GM10248 (cell line): ENCODE measurements at regions of chr11 and their contacts with region 1.

Region 1: DNA sequence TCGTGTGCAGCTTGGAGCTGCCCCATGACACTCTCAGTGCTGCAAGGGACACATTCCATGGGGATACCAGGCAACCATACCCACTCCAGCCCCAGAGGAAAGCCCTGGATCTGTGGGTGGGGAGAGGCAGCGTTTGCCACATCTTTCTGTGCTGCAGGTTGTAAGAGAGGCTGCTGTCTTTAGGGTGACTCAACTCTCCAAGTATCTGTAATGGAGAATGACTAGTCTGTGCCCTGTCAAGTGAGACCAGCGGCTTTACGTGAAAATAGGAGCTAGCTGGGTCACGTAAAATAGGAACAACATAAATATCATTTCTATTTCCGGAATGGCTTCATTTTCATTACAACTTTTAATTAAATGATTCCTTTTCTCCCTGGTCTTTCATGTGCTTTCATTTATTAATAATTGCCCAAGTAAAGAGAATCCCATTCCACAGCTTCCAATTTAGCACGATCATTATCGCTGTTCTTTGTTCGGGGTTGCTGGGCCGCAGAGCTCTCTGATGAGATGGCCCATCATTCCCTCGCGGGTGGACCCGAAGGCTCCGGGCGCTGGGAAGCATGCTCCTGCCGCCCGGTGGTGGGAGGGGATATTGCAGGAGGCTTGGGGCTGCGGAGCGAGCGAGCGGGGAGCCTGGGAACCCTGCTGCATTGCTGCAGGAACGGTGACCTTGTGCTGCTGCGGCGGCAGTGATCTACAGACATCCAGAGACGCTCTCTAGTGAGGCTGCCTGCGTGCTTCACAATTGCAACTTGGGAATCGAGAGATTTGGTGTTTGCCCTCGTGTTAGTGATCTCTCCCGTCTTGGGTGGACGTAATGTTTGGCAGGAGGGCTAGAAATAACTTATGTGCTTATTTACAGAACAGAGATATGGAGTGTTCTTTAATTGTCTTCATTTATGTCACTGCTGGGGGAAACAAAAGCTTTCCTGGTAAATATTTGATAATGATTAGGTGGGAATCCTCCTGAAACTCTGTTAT is 10.6 kb downstream of the SLC6A5 start:
- DNase-seq: peak; percentile 77
- CTCF ChIP-seq: peak; percentile 99

Region 2: DNA sequence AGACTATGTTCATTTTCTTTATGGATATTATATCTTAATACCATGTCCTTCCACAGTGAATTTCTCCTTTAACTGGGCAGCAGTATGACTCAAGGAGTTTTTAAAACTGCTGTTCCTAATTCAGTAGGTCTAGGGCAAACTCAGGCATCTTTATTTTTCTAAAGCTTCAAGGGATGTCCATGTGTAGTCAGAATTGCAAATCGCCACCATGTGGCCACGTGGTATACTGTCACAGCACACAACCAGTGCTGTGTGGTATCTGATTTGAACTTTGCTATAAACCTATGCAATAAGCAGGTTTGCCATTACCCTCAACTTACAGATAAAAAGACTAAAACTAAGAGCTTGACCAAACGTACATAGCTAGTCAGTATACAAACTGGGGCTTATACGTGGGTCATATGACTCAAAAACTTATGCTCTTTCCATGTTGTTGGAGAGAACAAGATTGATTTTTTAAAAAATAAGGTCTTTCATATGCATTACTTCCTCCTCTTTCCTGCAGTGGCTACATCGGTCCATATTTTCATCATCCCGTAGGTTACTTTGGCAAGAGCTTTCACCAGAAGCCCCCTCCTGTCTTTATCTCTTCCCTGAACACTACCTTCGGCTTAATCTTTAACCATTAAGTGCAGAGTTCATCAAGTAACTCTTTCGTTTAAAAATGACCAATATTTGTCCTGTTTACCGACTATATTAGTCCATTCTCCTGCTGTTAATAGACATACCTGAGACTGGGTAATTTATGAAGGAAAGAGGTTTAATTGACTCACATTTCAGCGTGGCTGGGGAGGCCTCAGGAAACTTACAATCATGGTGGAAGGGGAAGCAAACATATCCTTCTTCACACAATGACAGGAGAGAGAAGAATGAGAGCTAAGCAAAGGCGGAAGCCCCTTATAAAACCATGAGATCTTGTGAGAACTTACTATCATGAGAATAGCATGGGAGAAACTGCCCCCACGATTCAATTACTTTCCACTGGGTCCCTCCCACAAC is 254.5 kb before region 1 on chr11:
- CTCF ChIA-PET with region 1: interaction called, 13 read pairs
- POLR2A ChIA-PET with region 1: no interaction called
- DNase-seq: peak; percentile 24
- CTCF ChIP-seq: peak; percentile 48

Region 3: DNA sequence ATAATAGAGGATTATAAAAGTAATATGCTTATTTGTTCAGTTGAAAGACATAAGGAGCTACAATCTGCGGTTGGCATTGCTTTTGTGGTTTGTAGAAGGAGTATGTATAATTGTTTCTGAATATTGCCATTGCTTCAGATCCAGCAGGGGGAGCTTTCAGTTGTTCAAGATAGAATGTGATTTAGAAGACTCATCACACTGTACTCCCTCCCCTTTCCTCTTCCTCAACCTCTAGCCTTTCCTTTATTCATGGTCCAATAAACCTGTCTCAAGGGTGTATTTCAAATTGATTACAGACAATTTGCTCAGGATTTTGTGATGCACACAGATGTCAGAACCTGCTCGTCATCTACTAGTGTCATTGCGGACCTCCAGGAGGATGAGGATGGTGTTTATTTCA is 212.7 kb before region 1 on chr11:
- CTCF ChIA-PET with region 1: interaction called, 17 read pairs
- POLR2A ChIA-PET with region 1: no interaction called
- DNase-seq: peak; percentile 37
- CTCF ChIP-seq: peak; percentile 36

Region 4: DNA sequence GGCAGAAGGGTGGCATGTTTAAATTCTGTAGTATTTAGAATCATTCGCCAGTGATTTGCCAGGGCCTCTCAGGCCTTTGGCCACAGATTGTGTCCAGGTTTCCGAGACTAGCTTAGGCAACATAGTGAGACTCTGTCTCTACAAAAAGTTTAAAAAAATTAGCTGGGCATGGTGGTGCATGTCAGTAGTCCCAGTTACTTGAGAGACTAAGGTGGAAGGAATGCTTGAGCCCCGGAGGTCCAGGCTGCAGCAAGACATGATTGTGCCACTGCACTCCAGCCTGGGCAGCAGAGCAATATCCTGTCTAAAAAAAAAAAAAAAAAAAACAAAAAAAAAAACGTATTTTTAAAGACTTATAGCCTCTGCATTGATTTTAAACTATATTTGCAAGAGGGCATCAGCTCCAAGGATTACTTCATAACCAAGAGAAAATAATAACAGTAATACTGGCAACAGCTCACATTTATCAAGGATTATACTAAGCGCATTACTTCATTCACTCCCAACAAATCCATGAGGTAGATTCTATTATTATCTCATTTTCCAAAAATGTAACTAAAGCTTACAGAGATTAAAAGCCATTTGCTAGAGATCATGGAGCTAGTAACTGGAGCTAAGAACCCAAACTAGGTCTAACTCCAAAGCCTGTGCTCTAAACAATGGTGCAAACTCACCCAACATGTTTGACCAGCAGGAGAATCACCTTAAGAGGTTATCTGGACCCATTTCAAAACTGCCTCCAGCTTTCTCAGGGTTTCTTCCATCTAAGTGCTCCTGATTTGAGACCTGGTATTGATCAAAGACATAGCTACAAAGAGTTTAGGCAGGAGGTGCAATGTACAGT is 43.2 kb before region 1 on chr11:
- CTCF ChIA-PET with region 1: no interaction called
- POLR2A ChIA-PET with region 1: no interaction called
- DNase-seq: no peak
- CTCF ChIP-seq: no peak

Region 5: GRCh38 chr11:20626279-20626678 is 16.3 kb after region 1 on chr11:
- CTCF ChIA-PET with region 1: interaction called, 16 read pairs
- POLR2A ChIA-PET with region 1: no interaction called
- DNase-seq: no peak
- CTCF ChIP-seq: no peak

Region 6: DNA sequence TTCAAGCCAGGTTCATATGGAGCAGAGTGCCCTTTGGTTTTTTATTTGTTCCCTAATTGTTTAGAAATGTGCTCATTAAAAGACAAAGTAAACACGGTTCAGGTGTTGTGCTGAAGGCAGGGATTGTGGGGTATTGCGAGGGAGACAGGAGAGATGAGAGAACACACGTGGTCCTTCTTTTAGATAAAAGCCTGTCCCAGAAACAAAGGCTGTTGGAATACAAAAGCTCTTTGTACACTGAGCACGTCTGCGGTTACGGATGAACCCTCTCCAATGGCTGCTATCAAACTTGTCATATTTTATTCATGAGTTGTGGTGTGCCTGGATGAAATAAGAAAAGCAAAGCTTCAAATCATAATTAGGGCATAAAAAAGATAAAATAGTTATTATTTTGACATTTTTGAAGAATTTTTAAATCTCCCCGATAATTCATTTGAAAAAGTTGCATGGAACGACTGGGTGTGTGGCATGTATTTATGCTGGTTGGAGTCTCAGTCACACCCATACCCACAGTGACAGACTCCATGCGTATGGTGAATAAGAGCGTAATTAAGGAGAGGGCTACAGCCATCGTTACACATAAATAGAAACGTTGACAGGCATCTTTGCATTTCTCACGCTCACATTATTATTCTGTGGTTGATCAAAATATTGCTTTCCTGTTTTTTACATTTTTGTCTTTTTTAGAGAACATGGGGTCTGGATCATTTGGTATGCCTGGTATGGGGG is 152.3 kb after region 1 on chr11:
- CTCF ChIA-PET with region 1: no interaction called
- POLR2A ChIA-PET with region 1: no interaction called
- DNase-seq: no peak
- CTCF ChIP-seq: no peak